IMR-90 (cell line): ENCODE measurements at regions of chr20 and their contacts with region 1.

Region 1: GRCh38 chr20:44475694-44476560 is at the start of gene TTPAL:
- DNase-seq: peak; percentile 82
- ATAC-seq: peak; percentile 97
- H3K4me3 ChIP-seq: peak within 1 kb of the TSS; percentile 87
- H3K27ac ChIP-seq: peak within 1 kb of the TSS; percentile 90
- H3K4me1 ChIP-seq: peaks cover 4% of the 10 kb centered on the region; the same call in 1 of the 2 replicates
- H3K27me3 ChIP-seq: no peaks in the 10 kb centered on the region
- CTCF ChIP-seq: peak; percentile 38
- POLR2A ChIP-seq: peak; percentile 96
- RAD21 ChIP-seq: peak; percentile 34
- total RNA-seq, gene TTPAL: 8.2 and 11.9 TPM in 2 replicates

Region 2: GRCh38 chr20:44210422-44211176 is 265.3 kb before region 1 on chr20 and contains the start of gene OSER1:
- CTCF ChIA-PET with region 1: no interaction called
- POLR2A ChIA-PET with region 1: no interaction called
- dilution Hi-C with region 1: no loop called
- in situ Hi-C with region 1: loop called (anchors 10 kb)
- intact Hi-C with region 1: no loop called
- DNase-seq: peak; percentile 95
- ATAC-seq: peak; percentile 90
- H3K4me3 ChIP-seq: peak within 1 kb of the TSS; percentile 77
- H3K27ac ChIP-seq: peak within 1 kb of the TSS; percentile 75
- H3K4me1 ChIP-seq: peaks cover 4% of the 10 kb centered on the region; the same call in 1 of the 2 replicates
- H3K27me3 ChIP-seq: no peaks in the 10 kb centered on the region
- CTCF ChIP-seq: no peak
- POLR2A ChIP-seq: peak; percentile 92
- RAD21 ChIP-seq: no peak
- total RNA-seq, gene OSER1: 66.9 and 70.6 TPM in 2 replicates

Region 3: DNA sequence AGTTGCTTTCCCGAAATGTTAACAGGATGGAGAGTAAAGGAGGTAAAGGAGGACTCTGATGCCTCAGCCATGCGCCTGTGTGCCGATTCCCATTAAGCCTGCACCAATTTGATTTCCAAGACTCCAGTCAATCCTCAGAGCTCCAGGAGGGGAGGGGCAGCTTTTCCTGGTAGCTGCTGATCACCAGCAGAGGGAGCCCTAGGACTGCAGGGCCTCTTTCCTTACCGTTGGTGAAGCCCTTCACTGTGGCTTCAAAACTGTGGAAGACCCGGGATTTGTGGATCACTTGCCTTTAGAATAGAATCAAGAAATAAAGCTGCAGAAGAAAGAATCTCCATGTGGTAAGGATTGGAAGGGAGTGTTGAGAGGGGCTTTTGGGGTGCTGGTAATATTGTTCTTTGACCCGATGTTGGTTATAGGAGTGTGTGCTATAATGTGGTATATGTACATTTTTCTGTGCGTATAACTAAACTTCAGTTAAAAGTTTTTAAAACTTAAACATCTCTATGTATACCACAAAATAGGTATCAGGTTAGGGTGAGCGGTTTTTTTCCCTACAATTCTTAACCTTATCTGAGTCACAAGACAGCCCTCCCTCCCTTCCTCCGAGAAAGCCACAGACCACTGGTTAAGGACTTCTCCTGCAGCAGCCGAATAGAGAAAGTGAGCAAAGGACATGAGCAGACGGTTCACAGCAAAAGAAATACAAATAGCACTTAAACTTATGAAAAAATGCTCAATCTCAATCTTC is 258.4 kb before region 1 on chr20:
- CTCF ChIA-PET with region 1: no interaction called
- POLR2A ChIA-PET with region 1: no interaction called
- dilution Hi-C with region 1: no loop called
- in situ Hi-C with region 1: loop called (anchors 10 kb)
- intact Hi-C with region 1: loop called (anchors 1 kb)
- DNase-seq: peak; percentile 67
- ATAC-seq: peak; percentile 88
- H3K4me3 ChIP-seq: no peak overlapping the region
- H3K27ac ChIP-seq: no peak overlapping the region
- H3K4me1 ChIP-seq: no peaks in the 10 kb centered on the region
- H3K27me3 ChIP-seq: no peaks in the 10 kb centered on the region
- CTCF ChIP-seq: peak; percentile 88
- POLR2A ChIP-seq: no peak
- RAD21 ChIP-seq: peak; percentile 88